ENCODE measurements at regions of chr5 and their contacts with region 1.

Region 1: DNA sequence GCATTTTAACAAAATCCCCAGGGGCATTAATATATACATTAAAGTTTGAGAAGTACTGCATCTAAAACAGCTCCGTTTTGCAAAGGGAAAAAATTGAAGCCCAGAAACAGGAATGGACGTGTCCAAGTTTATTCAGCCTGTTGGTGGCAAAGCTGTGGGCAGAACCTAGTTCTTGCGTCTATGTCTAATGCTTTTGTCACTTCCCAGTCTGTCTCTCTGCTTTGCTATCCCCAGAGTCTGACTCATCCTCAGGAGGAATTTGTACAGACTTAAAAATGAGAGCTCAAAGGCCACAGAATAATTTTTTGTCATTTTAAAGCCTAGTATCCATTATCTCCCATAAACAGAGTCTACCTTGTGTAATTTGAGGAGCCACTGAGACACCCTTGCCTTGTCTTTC is 330.9 kb upstream of the GRIA1 start:
- ATAC-seq: peak in 4 of 8 experiments; percentile 39 to 97 (median 46)
- H3K4me3 ChIP-seq: no peak overlapping the region
- H3K27ac ChIP-seq: no peak overlapping the region
- H3K4me1 ChIP-seq: peaks cover 2 to 4% of the 10 kb centered on the region in 2 donors

Region 2: DNA sequence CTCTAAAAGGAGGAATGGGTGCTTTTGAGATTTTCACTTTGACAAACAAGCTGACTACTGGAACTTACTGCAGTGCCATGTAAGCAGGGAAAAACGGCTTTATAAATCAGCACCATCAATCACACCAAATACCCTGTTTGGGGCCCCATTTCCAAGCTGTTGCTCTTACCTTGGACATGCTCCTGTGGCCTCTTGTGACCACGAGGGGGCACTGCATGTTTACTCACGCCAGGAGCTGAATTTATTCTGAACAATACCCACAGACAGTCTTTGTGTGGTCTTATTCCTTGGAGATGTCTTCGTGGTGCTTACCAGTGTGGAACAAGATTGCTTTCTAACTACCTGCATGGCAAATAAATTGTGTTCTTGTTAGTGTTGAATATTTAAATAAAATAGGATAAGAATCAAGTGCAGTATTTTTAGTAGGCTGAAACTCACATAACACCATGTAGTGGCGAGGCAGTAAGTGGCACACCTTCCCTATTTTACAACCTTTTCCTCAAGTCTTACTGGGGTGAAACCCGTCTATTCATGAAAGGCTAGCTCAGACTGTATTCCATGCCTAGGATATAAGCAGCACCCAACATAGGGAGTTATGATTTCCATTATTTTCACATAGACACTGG is 599.0 kb before region 1 on chr5:
- in situ Hi-C with region 1: loop called in 1 of 9 experiments (anchors 25 kb)
- ATAC-seq: peak; percentile 26 to 90 (median 72)
- H3K4me3 ChIP-seq: no peak overlapping the region
- H3K27ac ChIP-seq: no peak overlapping the region
- H3K4me1 ChIP-seq: peaks cover 22 to 24% of the 10 kb centered on the region in 2 donors

Region 3: DNA sequence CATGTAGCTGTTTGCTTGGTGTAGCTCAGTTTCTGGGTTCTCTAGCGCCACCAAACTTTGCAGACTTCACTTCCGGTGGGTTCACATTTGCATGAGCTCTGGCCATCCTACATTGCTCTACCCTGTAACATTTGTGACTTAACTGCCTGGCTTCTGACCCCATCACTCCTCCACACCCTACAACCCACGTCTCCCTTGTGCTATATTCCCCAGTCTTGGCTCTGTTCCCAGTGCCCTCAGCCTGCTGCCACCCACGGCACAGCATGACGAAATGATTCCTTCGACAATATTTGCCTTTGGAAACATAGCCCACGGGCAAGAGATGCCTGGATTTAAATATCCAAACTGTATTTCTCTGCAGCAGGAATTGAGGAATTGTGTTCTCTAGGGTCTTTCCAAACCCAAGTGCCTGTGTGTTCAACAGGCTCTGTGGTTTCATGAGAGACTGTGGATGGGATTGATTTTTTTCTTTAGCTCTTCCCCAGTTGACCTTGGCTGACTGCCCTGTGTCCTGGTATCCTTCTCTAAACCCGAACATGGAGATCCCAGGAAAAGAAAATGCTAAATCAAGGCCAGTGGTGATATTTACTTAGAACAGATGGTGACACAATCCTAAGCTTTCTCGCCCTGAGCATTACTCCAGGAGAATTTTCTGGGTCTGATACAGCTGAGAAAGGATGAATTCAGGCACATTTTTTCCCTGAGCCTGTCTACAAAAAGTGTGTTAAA is 286.4 kb after region 1 on chr5:
- in situ Hi-C with region 1: no loop called
- ATAC-seq: peak in 6 of 8 experiments; percentile 37 to 90 (median 51)
- H3K4me3 ChIP-seq: no peak overlapping the region
- H3K27ac ChIP-seq: no peak overlapping the region
- H3K4me1 ChIP-seq: peaks cover 19 to 27% of the 10 kb centered on the region in 2 donors

Measured in motor neuron (in vitro differentiated cells).